PC-3 (cell line): ENCODE measurements at regions of chr3 and their contacts with region 1.

Region 1: GRCh38 chr3:45507820-45508317 is 86.7 kb upstream of the LIMD1 start:
- DNase-seq: no peak
- ATAC-seq: peak; percentile 19; the same call in 1 of the 2 replicates
- H3K4me3 ChIP-seq: no peak overlapping the region
- H3K27ac ChIP-seq: peak overlapping the region; percentile 86
- H3K4me1 ChIP-seq: peaks cover 23% of the 10 kb centered on the region
- H3K27me3 ChIP-seq: no peaks in the 10 kb centered on the region
- CTCF ChIP-seq: peak; percentile 26; the same call in 1 of the 2 replicates

Region 2: GRCh38 chr3:45462522-45463265 is 45.2 kb before region 1 on chr3:
- CTCF ChIA-PET with region 1: no interaction called
- POLR2A ChIA-PET with region 1: no interaction called
- intact Hi-C with region 1: no loop called
- DNase-seq: no peak
- ATAC-seq: no peak
- H3K4me3 ChIP-seq: no peak overlapping the region
- H3K27ac ChIP-seq: no peak overlapping the region
- H3K4me1 ChIP-seq: no peaks in the 10 kb centered on the region
- H3K27me3 ChIP-seq: no peaks in the 10 kb centered on the region
- CTCF ChIP-seq: no peak

Region 3: GRCh38 chr3:45473841-45474240 is 34.0 kb before region 1 on chr3:
- CTCF ChIA-PET with region 1: no interaction called
- POLR2A ChIA-PET with region 1: no interaction called
- intact Hi-C with region 1: no loop called
- DNase-seq: no peak
- ATAC-seq: no peak
- H3K4me3 ChIP-seq: no peak overlapping the region
- H3K27ac ChIP-seq: no peak overlapping the region
- H3K4me1 ChIP-seq: no peaks in the 10 kb centered on the region
- H3K27me3 ChIP-seq: no peaks in the 10 kb centered on the region
- CTCF ChIP-seq: no peak

Region 4: GRCh38 chr3:45546716-45547701 is 39.1 kb after region 1 on chr3:
- CTCF ChIA-PET with region 1: no interaction called
- POLR2A ChIA-PET with region 1: no interaction called
- intact Hi-C with region 1: loop called (anchors 1 kb)
- DNase-seq: peak; percentile 71
- ATAC-seq: peak; percentile 57
- H3K4me3 ChIP-seq: no peak overlapping the region
- H3K27ac ChIP-seq: peak overlapping the region; percentile 47
- H3K4me1 ChIP-seq: peaks cover 45% of the 10 kb centered on the region
- H3K27me3 ChIP-seq: no peaks in the 10 kb centered on the region
- CTCF ChIP-seq: peak; percentile 74

Region 5: GRCh38 chr3:45612918-45613602 is 105.2 kb after region 1 on chr3:
- CTCF ChIA-PET with region 1: interaction called, 16 read pairs
- POLR2A ChIA-PET with region 1: no interaction called
- intact Hi-C with region 1: no loop called
- DNase-seq: peak; percentile 70
- ATAC-seq: peak; percentile 39
- H3K4me3 ChIP-seq: no peak overlapping the region
- H3K27ac ChIP-seq: peak overlapping the region; percentile 42
- H3K4me1 ChIP-seq: peaks cover 46% of the 10 kb centered on the region
- H3K27me3 ChIP-seq: no peaks in the 10 kb centered on the region
- CTCF ChIP-seq: no peak

Region 6: GRCh38 chr3:45656575-45657363 is 148.9 kb after region 1 on chr3:
- CTCF ChIA-PET with region 1: interaction called, 16 read pairs
- POLR2A ChIA-PET with region 1: no interaction called
- intact Hi-C with region 1: loop called (anchors 1 kb)
- DNase-seq: peak; percentile 97
- ATAC-seq: peak; percentile 76
- H3K4me3 ChIP-seq: no peak overlapping the region
- H3K27ac ChIP-seq: peak overlapping the region; percentile 49
- H3K4me1 ChIP-seq: peaks cover 38% of the 10 kb centered on the region
- H3K27me3 ChIP-seq: no peaks in the 10 kb centered on the region
- CTCF ChIP-seq: peak; percentile 94

Region 7: GRCh38 chr3:45665101-45665572 is 157.3 kb after region 1 on chr3:
- CTCF ChIA-PET with region 1: interaction called, 5 read pairs
- POLR2A ChIA-PET with region 1: no interaction called
- intact Hi-C with region 1: loop called (anchors 1 kb)
- DNase-seq: peak; percentile 74
- ATAC-seq: no peak
- H3K4me3 ChIP-seq: no peak overlapping the region
- H3K27ac ChIP-seq: no peak overlapping the region
- H3K4me1 ChIP-seq: peaks cover 44% of the 10 kb centered on the region
- H3K27me3 ChIP-seq: no peaks in the 10 kb centered on the region
- CTCF ChIP-seq: peak; percentile 80

Region 8: DNA sequence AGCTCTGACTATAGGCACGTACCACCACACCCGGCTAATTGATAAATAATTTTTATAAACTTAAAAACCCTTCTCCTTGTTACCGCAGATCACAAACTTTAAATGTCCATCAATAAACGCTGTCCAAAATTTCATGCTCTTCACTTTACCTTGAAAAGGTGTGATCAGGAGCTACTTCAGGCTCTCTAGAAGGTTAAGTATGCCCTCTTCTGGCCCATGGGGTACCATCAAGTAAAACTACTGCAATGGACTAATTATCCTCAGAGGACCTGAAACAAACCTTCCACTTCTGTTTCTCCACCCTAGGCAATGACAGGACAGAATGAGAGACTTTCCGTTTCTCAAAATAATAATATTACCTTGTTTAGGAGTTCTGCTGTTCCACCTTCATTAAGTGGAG is 324.8 kb after region 1 on chr3:
- CTCF ChIA-PET with region 1: no interaction called
- POLR2A ChIA-PET with region 1: no interaction called
- intact Hi-C with region 1: loop called (anchors 1 kb)
- DNase-seq: peak; percentile 63
- ATAC-seq: peak; percentile 83
- H3K4me3 ChIP-seq: no peak overlapping the region
- H3K27ac ChIP-seq: no peak overlapping the region
- H3K4me1 ChIP-seq: no peaks in the 10 kb centered on the region
- H3K27me3 ChIP-seq: no peaks in the 10 kb centered on the region
- CTCF ChIP-seq: peak; percentile 66